CD8-positive, alpha-beta T cell (primary cell): ENCODE measurements at regions of chr11 and their contacts with region 1.

Region 1: DNA sequence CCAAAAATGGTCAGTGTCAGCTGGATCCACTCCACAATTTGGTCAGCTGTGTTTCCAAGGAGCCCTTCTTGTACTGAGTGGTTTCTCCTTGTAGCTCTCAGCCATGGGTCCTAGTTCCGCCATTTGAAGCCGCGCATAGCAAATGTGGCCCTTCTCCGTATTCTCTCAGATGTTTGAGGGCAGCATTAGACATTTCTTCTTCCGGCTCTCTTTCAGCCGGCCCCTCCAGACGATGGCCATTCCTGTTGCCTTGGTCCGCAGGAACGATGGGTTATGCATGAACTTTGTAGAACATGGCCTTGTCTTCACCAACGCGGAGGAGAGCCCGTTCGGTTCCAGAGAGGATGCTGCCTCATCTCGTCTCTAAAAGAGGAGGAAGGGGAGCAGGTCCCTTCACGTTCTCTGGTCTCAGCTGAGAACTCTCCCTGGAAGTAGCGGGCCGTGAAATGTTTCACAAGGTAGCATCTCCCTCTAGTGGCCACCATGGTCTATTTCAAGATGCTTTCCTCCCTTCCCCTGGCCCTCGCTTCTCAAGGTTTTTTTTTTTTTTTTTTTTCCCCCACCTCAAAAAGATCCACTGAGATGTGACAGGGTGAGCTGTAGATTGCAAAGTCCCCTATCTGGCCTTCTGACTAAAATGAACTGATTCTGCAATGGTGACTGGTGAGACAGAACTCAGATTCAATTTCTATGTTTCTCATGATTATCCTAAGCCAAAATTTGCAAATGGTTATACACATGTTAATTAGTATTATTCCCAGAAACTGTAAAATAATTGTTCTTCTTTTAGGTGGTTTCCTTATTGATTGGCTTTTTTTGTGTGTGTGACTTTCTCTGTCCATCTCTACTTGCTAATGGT is 19.8 kb upstream of the PLET1 start:
- DNase-seq: peak; percentile 24 to 90 (median 67)
- ATAC-seq: peak; percentile 93
- H3K4me3 ChIP-seq: peak overlapping the region; percentile 60 to 79
- H3K4me3 Mint-ChIP-seq: peak overlapping the region; percentile 92
- H3K27ac ChIP-seq: peak overlapping the region in 1 of 2 experiments; percentile 28
- H3K27ac Mint-ChIP-seq: peak overlapping the region; percentile 77
- H3K4me1 ChIP-seq: no peaks in the 10 kb centered on the region
- H3K4me1 Mint-ChIP-seq: peaks cover 8% of the 10 kb centered on the region
- H3K27me3 ChIP-seq: no peaks in the 10 kb centered on the region
- H3K27me3 Mint-ChIP-seq: no peaks in the 10 kb centered on the region
- CTCF ChIP-seq: peak; percentile 44

Region 2: GRCh38 chr11:111730871-111731591 is 549.5 kb before region 1 on chr11:
- CTCF ChIA-PET with region 1: no interaction called
- POLR2A ChIA-PET with region 1: no interaction called
- intact Hi-C with region 1: no loop called
- DNase-seq: no peak
- ATAC-seq: no peak
- H3K4me3 ChIP-seq: no peak overlapping the region
- H3K4me3 Mint-ChIP-seq: no peak overlapping the region
- H3K27ac ChIP-seq: no peak overlapping the region
- H3K27ac Mint-ChIP-seq: no peak overlapping the region
- H3K4me1 ChIP-seq: no peaks in the 10 kb centered on the region
- H3K4me1 Mint-ChIP-seq: peaks cover 2% of the 10 kb centered on the region
- H3K27me3 ChIP-seq: no peaks in the 10 kb centered on the region
- H3K27me3 Mint-ChIP-seq: no peaks in the 10 kb centered on the region
- CTCF ChIP-seq: no peak

Region 3: DNA sequence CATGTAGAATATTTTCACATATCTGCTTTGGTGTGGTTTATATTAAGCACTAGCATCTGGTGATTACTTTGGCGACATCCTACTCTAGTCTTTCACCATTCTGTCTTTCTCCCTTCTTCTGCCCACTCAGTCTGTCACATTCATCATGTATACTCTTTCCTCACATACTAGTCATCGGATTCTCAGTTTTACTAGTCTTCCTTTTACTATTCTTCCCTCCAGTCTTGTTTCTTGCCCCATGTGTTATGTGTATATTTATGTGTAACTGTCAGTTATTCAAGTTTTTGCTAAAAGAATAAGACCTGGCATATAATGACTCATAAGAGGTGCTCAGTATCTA is 347.9 kb before region 1 on chr11:
- CTCF ChIA-PET with region 1: interaction called, 3 read pairs
- POLR2A ChIA-PET with region 1: no interaction called
- intact Hi-C with region 1: loop called (anchors 2 kb)
- DNase-seq: no peak
- ATAC-seq: no peak
- H3K4me3 ChIP-seq: no peak overlapping the region
- H3K4me3 Mint-ChIP-seq: peak overlapping the region; percentile 7
- H3K27ac ChIP-seq: no peak overlapping the region
- H3K27ac Mint-ChIP-seq: no peak overlapping the region
- H3K4me1 ChIP-seq: peaks cover 17% of the 10 kb centered on the region
- H3K4me1 Mint-ChIP-seq: peaks cover 23% of the 10 kb centered on the region
- H3K27me3 ChIP-seq: no peaks in the 10 kb centered on the region
- H3K27me3 Mint-ChIP-seq: peaks cover 3% of the 10 kb centered on the region
- CTCF ChIP-seq: no peak

Region 4: GRCh38 chr11:112113539-112114457 is 166.7 kb before region 1 on chr11:
- CTCF ChIA-PET with region 1: interaction called, 11 read pairs
- POLR2A ChIA-PET with region 1: interaction called, 3 read pairs
- intact Hi-C with region 1: loop called in 1 of 2 experiments (anchors 10 kb)
- DNase-seq: peak in 2 of 9 experiments; percentile 51 to 69
- ATAC-seq: peak; percentile 54
- H3K4me3 ChIP-seq: no peak overlapping the region
- H3K4me3 Mint-ChIP-seq: no peak overlapping the region
- H3K27ac ChIP-seq: no peak overlapping the region
- H3K27ac Mint-ChIP-seq: no peak overlapping the region
- H3K4me1 ChIP-seq: peaks cover 4% of the 10 kb centered on the region
- H3K4me1 Mint-ChIP-seq: peaks cover 10% of the 10 kb centered on the region
- H3K27me3 ChIP-seq: no peaks in the 10 kb centered on the region
- H3K27me3 Mint-ChIP-seq: no peaks in the 10 kb centered on the region
- CTCF ChIP-seq: peak; percentile 89

Region 5: DNA sequence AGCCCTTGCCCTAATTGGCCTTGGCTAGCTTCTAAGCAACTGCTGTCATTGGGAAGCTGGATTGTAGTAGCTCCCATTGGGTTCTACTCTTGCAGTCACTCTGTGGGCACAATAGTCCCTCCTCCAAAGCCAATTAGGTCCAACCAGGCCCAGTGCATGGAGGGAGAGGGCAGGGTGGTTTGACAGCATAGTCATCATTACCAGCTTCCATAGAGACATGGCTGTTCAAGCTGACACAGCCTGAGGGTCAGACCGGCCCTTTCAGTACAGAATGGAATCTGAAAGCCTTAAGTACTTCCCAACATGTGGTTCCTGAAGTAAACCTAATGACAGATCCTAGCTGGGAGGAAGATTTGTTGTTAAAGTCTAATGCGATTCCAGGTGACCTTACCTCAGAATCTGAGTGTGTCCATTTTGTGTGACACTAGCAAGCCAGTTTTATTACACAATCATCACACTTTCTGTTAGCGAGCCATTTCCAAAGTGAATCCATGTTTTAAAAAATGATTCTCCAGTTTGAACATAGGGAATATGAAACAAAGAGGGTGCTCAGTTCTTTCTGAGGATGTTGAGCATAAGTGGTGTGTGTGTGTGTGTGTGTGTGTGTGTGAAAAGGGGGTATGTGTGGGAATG is 26.8 kb before region 1 on chr11:
- CTCF ChIA-PET with region 1: interaction called, 11 read pairs
- POLR2A ChIA-PET with region 1: no interaction called
- intact Hi-C with region 1: no loop called
- DNase-seq: no peak
- ATAC-seq: no peak
- H3K4me3 ChIP-seq: no peak overlapping the region
- H3K4me3 Mint-ChIP-seq: no peak overlapping the region
- H3K27ac ChIP-seq: no peak overlapping the region
- H3K27ac Mint-ChIP-seq: no peak overlapping the region
- H3K4me1 ChIP-seq: no peaks in the 10 kb centered on the region
- H3K4me1 Mint-ChIP-seq: no peaks in the 10 kb centered on the region
- H3K27me3 ChIP-seq: peaks cover 0 to 2% of the 10 kb centered on the region in 2 experiments
- H3K27me3 Mint-ChIP-seq: no peaks in the 10 kb centered on the region
- CTCF ChIP-seq: no peak

Region 6: DNA sequence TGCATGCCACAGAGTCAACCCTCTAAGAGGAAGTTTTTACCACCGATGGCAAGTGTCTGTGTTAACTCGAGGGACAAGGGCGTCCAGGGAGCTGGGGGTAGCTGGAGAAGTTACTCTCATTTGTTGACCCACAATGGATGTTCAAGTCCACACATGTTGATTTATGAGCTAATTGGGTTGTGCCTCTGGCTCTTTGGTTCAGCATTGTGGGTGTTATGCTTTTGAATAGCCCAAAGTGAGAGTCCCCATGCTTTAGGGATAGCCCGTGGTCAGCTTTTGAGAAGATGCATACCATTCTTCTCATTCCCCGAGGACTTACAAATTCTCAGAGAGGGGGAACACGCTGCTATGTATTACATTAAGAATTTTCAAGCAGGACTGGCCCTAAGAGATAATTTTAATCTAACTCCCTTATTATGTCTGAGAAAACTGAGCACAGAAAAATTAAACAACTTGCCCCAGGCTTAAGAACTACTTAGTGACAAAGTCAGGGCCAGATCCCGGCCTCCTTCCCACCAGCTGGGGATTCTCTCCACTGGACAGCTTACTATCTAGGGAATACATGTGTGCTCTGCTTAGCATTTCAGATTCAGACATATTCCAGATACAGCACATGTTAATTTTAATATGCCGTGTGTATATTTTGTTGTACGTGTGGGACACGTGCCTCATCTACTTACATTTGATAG is 14.6 kb before region 1 on chr11:
- CTCF ChIA-PET with region 1: interaction called, 22 read pairs
- POLR2A ChIA-PET with region 1: no interaction called
- intact Hi-C with region 1: no loop called
- DNase-seq: no peak
- ATAC-seq: no peak
- H3K4me3 ChIP-seq: no peak overlapping the region
- H3K4me3 Mint-ChIP-seq: no peak overlapping the region
- H3K27ac ChIP-seq: no peak overlapping the region
- H3K27ac Mint-ChIP-seq: no peak overlapping the region
- H3K4me1 ChIP-seq: no peaks in the 10 kb centered on the region
- H3K4me1 Mint-ChIP-seq: no peaks in the 10 kb centered on the region
- H3K27me3 ChIP-seq: no peaks in the 10 kb centered on the region
- H3K27me3 Mint-ChIP-seq: no peaks in the 10 kb centered on the region
- CTCF ChIP-seq: no peak

Region 7: DNA sequence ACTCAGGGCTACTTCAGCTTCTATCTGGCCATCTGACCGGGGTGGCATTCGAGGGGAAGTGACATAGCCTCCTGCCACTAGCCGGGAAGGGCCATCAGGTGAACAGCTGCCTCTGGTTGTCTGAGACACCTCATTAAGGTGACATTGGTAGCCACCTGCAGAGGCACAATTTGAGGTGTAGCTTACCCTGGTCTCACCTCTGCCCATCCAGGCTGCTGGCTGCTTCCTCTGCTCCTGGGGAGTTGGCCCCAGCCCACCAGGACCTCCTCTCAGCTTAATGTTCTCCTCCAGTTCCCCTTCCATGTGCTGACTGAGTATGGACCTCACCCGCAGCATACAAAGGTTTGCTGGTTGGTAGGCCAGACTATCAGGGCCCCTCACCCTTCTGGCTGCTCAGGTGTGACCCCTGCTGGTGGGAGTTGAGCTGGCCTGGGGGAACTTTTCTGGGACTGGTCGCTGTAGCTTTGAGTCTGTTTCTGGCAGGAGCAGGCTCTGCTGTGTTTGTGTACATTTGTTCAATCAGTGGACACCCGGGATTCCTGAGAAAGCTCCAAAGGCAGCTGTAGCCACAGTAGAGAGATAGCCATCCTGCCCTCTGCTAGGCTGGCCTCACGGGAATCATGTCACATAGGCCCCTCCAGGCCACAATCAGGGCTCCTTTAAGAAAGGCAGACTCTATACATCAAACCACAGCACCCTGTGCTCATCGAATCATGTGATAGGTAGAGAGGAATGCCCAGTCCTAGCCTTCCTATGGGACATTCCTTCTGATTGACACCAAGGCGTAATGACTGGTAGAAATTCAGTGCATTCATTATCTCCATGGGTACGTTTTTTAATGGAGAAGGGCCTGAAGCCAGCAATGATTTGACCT is 275.2 kb after region 1 on chr11:
- CTCF ChIA-PET with region 1: interaction called, 39 read pairs
- POLR2A ChIA-PET with region 1: no interaction called
- intact Hi-C with region 1: no loop called
- DNase-seq: peak; percentile 32 to 74 (median 62)
- ATAC-seq: peak; percentile 62
- H3K4me3 ChIP-seq: no peak overlapping the region
- H3K4me3 Mint-ChIP-seq: no peak overlapping the region
- H3K27ac ChIP-seq: no peak overlapping the region
- H3K27ac Mint-ChIP-seq: no peak overlapping the region
- H3K4me1 ChIP-seq: no peaks in the 10 kb centered on the region
- H3K4me1 Mint-ChIP-seq: no peaks in the 10 kb centered on the region
- H3K27me3 ChIP-seq: no peaks in the 10 kb centered on the region
- H3K27me3 Mint-ChIP-seq: peaks cover 9% of the 10 kb centered on the region
- CTCF ChIP-seq: peak; percentile 52